Left cardiac atrium (tissue), 4 donors: ENCODE measurements at regions of chr12 and their contacts with region 1.

Region 1: GRCh38 chr12:13278249-13278787 is 81.8 kb downstream of the EMP1 start:
- DNase-seq: peak; percentile 77
- ATAC-seq: peak; percentile 95 to 96

Region 2: GRCh38 chr12:13534645-13535398 is 256.5 kb after region 1 on chr12:
- intact Hi-C with region 1: loop called in 1 of 2 experiments (anchors 5 kb)
- DNase-seq: peak; percentile 64
- ATAC-seq: peak; percentile 57 to 73

Region 3: GRCh38 chr12:13661005-13661887 is 382.9 kb after region 1 on chr12:
- intact Hi-C with region 1: loop called (anchors 2 to 10 kb)
- DNase-seq: peak; percentile 33
- ATAC-seq: peak; percentile 78 to 82

Region 4: DNA sequence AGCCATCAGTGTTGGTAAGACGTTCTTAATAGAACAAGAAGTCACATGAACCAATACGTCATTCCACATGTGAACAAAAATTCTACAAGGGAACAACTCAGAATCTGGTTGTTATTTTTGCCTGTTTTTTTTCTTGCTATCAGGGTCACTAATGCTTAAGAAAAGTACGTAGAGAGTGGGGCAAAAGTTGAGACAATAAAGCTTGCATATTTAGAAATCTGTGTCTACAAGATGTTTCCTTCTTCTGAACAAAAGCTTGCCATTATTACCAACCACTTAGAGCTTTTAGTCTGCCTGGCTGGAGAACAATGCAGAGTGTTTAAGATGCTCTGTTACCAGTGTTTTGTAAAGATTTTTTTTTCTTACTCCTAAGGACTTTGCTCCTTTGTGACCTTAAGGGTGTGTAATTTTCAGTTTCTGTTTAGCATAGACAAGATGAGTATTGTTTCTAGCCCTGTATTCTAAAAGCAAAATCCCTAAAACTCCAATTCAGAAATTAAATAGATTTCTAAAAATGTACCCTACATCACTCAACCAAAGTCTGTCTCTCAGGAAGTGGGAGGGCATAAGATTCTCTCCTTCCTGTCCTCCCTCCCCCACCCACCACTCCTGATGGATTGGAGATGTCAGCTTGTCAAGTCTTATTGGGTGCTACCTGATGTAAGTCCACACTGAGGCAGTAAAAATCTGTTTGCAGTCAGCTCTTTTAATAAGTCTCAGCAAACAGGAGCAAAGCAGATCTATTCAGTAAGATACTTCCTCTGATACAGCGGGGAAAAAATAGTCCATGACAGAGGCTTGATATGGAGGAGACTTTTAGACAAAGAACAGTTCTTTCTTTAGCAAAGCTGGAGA is 435.5 kb after region 1 on chr12:
- intact Hi-C with region 1: no loop called
- DNase-seq: no peak
- ATAC-seq: no peak

Region 5: DNA sequence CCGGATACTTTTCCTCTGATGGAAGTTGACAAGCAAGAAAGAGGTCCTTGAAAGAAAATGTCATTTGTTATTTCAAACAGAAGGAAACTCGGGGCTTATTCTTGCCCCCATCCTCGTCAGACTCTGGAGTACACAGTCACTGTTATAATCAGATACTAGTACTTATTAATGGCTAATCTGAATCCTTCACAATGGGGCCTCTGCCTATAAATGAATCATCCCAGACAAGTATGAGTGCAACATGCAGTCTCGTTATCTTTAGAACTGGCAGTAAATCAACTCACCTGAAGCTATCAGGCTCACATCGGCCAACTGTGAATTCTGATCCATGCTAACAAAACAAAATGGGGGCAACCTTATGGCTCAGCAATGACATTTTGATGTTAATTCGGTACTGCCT is 486.4 kb after region 1 on chr12:
- intact Hi-C with region 1: no loop called
- DNase-seq: no peak
- ATAC-seq: no peak

Region 6: DNA sequence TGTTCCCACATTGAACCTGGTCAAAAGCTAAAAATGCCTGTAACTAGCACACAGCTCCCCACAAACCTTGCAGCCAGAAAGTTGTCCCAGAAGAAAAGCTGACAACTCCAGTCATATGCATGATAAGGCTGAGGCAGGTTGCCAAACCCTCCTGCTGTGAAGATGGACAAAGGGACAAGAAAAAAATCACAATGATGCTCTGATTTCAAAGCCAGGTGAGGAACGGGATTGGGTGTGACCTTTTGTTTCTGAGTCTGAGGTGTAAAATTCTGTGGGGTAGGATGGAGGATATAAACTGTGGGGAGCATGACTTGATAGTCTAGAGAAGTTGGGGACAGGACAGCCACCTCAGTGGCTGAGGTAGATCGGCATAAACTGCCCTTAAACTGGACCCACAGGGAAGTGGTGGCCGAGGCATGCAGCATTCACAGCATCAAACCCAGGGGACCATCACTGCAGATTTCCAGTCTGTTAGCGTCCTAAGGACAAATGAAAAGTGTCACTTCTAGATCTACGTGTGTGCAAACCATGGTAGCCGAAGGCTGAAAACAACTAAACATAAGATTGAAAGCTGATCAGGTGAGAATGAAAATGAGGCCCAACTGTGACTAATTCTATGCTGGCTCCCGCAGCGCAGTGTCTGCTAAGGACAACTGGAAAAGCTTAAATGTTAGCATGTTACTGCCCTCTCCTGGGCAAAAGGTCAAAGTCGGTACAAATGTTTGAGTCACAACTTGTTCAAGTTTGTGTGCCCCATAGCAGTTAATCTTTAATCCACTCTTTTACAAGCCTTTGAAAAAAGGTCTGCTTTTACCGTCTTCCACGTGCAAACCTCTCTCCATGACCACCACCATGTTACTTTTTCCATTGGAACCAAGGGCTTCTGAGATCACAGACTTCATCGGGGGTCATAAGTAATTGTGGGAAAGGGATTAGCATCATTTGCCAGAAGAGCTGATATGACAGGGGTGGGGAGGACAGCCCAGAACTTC is 663.2 kb after region 1 on chr12:
- intact Hi-C with region 1: loop called in 1 of 2 experiments (anchors 5 kb)
- DNase-seq: peak; percentile 33
- ATAC-seq: peak; percentile 82 to 84